ENCODE measurements at regions of chr7 and their contacts with region 1.

Region 1: GRCh38 chr7:90155206-90155605 is 937 bp downstream of the STEAP1 start:
- DNase-seq: no peak
- H3K4me3 ChIP-seq: peak overlapping the region in 2 of 4 donors; percentile 53 to 59
- H3K27ac ChIP-seq: peak overlapping the region in 1 of 4 donors; percentile 26
- H3K4me1 ChIP-seq: peaks cover 0 to 6% (median 1%) of the 10 kb centered on the region in 4 donors
- H3K27me3 ChIP-seq: no peaks in the 10 kb centered on the region
- CTCF ChIP-seq: no peak
- EP300 ChIP-seq: no peak
- POLR2A ChIP-seq: no peak

Region 2: DNA sequence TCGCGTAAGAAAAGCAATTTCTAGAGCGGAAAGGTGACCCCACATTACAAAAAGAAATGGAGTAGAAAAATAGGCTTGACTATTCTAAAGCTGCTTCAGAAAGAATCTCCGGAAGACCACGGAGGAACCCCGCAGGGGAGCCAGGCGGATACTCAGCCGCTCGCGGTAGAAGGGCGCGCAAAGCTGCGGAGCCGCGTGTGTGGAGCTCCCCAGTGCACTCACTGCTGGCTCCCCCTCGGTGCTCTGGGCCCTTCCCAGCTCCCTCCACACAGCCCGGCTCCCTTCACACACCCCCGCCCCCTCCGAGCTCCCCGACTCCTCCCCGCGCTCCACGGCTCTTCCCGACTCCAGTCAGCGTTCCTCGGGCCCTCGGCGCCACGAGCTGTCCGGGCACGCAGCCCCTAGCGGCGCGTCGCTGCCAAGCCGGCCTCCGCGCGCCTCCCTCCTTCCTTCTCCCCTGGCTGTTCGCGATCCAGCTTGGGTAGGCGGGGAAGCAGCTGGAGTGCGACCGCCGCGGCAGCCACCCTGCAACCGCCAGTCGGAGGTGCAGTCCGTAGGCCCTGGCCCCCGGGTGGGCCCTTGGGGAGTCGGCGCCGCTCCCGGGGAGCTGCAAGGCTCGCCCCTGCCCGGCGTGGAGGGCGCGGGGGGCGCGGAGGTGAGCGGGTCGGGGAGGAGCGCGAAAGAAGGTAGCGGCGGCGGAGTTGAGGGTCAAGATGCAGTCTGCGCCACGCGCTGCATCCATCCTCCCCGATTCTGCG is 56.4 kb after region 1 on chr7 and contains the start of gene STEAP2:
- intact Hi-C with region 1: loop called (anchors 2 kb)
- DNase-seq: peak; percentile 98
- H3K4me3 ChIP-seq: peak within 1 kb of the TSS; percentile 70 to 76 (median 73)
- H3K27ac ChIP-seq: peak within 1 kb of the TSS; percentile 80 to 89 (median 88)
- H3K4me1 ChIP-seq: peaks cover 0 to 16% (median 7%) of the 10 kb centered on the region in 4 donors
- H3K27me3 ChIP-seq: no peaks in the 10 kb centered on the region
- CTCF ChIP-seq: peak; percentile 67 to 77 (median 72)
- EP300 ChIP-seq: no peak
- POLR2A ChIP-seq: peak; percentile 15 to 69
- total RNA-seq, gene STEAP2: 22.5 to 32.1 (median 27.6) TPM

Region 3: GRCh38 chr7:90262438-90262837 is 107.2 kb after region 1 on chr7:
- intact Hi-C with region 1: loop called (anchors 1 kb)
- DNase-seq: no peak
- H3K4me3 ChIP-seq: no peak overlapping the region
- H3K27ac ChIP-seq: no peak overlapping the region
- H3K4me1 ChIP-seq: no peaks in the 10 kb centered on the region
- H3K27me3 ChIP-seq: no peaks in the 10 kb centered on the region
- CTCF ChIP-seq: peak in 3 of 4 experiments; percentile 31 to 54 (median 41)
- EP300 ChIP-seq: no peak
- POLR2A ChIP-seq: no peak

Region 4: DNA sequence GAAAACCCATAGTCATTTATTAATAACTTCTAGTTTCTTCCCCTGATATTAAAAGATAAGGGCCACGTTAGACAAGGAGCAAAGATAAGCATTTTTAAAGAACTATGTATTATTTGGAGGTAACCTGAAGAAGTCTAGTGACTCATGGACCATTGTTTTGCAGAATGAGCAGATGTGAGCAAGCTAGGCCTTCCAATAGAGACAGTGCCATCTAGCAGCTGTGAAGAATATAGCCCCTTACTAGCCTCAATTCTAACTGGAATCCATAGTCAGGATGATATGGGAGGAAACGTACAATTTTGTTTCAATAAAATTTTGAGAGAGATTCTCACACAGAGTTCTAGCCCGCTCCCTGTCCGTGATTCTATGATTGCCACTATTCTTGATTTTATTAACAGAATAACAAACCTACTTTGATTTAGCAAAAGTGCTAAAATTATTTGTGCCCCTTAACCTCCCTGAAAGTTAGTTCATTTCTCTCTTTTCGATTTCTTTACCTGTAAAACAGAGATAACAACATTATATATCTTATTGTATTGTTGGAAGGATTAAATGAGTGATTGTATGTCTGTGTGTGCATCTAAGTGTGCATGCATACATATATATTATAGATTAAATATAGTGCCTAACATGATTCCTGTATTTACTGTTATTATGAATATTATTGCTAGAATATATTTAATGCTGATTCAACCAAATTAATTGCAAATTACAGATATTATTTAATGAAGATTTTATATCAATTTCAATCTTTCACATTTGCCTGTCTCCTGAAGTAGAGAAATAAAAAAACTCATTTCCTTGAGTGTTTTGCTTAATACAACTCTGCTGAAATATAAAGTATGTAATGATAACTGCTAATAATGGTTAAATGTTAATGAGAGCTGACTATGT is 143.2 kb after region 1 on chr7:
- intact Hi-C with region 1: loop called (anchors 2 kb)
- DNase-seq: no peak
- H3K4me3 ChIP-seq: no peak overlapping the region
- H3K27ac ChIP-seq: no peak overlapping the region
- H3K4me1 ChIP-seq: no peaks in the 10 kb centered on the region
- H3K27me3 ChIP-seq: no peaks in the 10 kb centered on the region
- CTCF ChIP-seq: peak in 3 of 4 experiments; percentile 9 to 33 (median 18)
- EP300 ChIP-seq: no peak
- POLR2A ChIP-seq: no peak

Region 5: GRCh38 chr7:90387470-90388240 is 232.4 kb after region 1 on chr7:
- intact Hi-C with region 1: no loop called
- DNase-seq: no peak
- H3K4me3 ChIP-seq: no peak overlapping the region
- H3K27ac ChIP-seq: no peak overlapping the region
- H3K4me1 ChIP-seq: no peaks in the 10 kb centered on the region
- H3K27me3 ChIP-seq: no peaks in the 10 kb centered on the region
- CTCF ChIP-seq: no peak
- EP300 ChIP-seq: no peak
- POLR2A ChIP-seq: no peak

Region 6: GRCh38 chr7:90424720-90425119 is 269.5 kb after region 1 on chr7:
- intact Hi-C with region 1: loop called (anchors 5 kb)
- DNase-seq: no peak
- H3K4me3 ChIP-seq: no peak overlapping the region
- H3K27ac ChIP-seq: no peak overlapping the region
- H3K4me1 ChIP-seq: no peaks in the 10 kb centered on the region
- H3K27me3 ChIP-seq: no peaks in the 10 kb centered on the region
- CTCF ChIP-seq: no peak
- EP300 ChIP-seq: no peak
- POLR2A ChIP-seq: no peak